Mammary epithelial cell (primary cell): ENCODE measurements at regions of chr1 and their contacts with region 1.

Region 1: DNA sequence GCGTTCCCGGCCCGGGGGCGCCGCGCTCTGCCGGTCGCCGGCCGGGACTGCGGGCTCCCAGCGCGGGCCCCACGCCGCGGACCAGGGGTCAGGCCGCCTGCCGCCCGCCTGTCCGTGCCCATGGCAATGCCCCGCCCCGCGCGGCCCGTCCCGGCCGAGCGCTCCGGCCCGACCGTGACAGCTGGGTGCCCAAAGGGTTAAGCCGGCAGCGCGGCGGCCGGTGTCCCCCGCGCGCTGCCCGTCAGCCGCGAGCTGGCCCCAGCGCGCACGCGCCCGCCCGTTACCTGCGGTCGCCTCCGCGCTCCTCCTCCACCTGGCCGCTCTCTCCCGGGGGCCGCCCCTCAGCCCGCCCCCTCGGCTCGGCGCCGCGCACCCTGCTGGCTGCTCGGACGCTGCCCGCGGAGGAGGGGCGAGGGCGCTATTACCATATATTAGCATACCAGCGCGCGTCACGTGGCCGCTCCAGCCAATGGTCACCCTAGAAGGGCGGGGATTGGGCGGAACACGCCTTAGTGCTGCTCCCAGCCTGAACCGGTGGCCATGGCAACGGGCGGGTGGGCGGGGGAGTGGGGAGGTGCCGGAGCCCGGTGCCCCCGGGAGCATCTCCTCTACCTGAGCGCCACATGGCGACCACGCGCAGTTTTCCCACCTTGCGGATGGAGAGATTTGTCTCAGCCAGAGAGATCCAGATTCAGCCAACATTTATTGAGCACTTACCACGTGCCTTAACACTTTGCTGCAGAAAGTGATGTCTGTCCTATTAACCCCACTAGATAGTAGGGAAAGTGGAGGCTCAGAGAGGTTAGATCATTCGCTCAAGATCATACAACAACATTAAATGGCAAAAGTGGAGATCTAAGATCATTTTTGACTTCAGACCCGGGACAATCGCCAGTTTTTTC is at the start of gene PHC2:
- DNase-seq: peak; percentile 97
- H3K4me3 ChIP-seq: peak within 1 kb of the TSS; percentile 70 to 82 (median 76)
- H3K27ac ChIP-seq: peak within 1 kb of the TSS; percentile 54
- H3K4me1 ChIP-seq: peaks cover 55% of the 10 kb centered on the region
- H3K27me3 ChIP-seq: no peaks in the 10 kb centered on the region
- CTCF ChIP-seq: peak in 1 of 2 donors; percentile 28
- total RNA-seq, gene PHC2: 136 to 140 TPM

Region 2: GRCh38 chr1:33127001-33127791 is 303.7 kb before region 1 on chr1:
- CTCF ChIA-PET with region 1: no interaction called
- dilution Hi-C with region 1: no loop called
- in situ Hi-C with region 1: loop called in 1 of 2 experiments (anchors 10 kb)
- intact Hi-C with region 1: no loop called
- DNase-seq: peak; percentile 99
- H3K4me3 ChIP-seq: peak overlapping the region; percentile 90 to 100 (median 96)
- H3K27ac ChIP-seq: peak overlapping the region; percentile 79
- H3K4me1 ChIP-seq: peaks cover 20% of the 10 kb centered on the region
- H3K27me3 ChIP-seq: no peaks in the 10 kb centered on the region
- CTCF ChIP-seq: peak; percentile 95 to 99

Region 3: GRCh38 chr1:33349778-33350610 is 80.9 kb before region 1 on chr1:
- CTCF ChIA-PET with region 1: no interaction called
- dilution Hi-C with region 1: no loop called
- in situ Hi-C with region 1: no loop called
- intact Hi-C with region 1: loop called (anchors 5 kb)
- DNase-seq: peak; percentile 72
- H3K4me3 ChIP-seq: peak overlapping the region; percentile 45 to 82 (median 73)
- H3K27ac ChIP-seq: peak overlapping the region; percentile 41
- H3K4me1 ChIP-seq: peaks cover 38% of the 10 kb centered on the region
- H3K27me3 ChIP-seq: no peaks in the 10 kb centered on the region
- CTCF ChIP-seq: no peak

Region 4: GRCh38 chr1:33384040-33384812 is 46.7 kb before region 1 on chr1:
- CTCF ChIA-PET with region 1: no interaction called
- dilution Hi-C with region 1: loop called (anchors 5 kb)
- in situ Hi-C with region 1: no loop called
- intact Hi-C with region 1: loop called (anchors 5 kb)
- DNase-seq: peak; percentile 59
- H3K4me3 ChIP-seq: no peak overlapping the region
- H3K27ac ChIP-seq: no peak overlapping the region
- H3K4me1 ChIP-seq: peaks cover 27% of the 10 kb centered on the region
- H3K27me3 ChIP-seq: no peaks in the 10 kb centered on the region
- CTCF ChIP-seq: no peak

Region 5: GRCh38 chr1:33470495-33471012 is 39.6 kb after region 1 on chr1:
- CTCF ChIA-PET with region 1: no interaction called
- dilution Hi-C with region 1: no loop called
- in situ Hi-C with region 1: no loop called
- intact Hi-C with region 1: no loop called
- DNase-seq: peak; percentile 87
- H3K4me3 ChIP-seq: no peak overlapping the region
- H3K27ac ChIP-seq: no peak overlapping the region
- H3K4me1 ChIP-seq: peaks cover 19% of the 10 kb centered on the region
- H3K27me3 ChIP-seq: no peaks in the 10 kb centered on the region
- CTCF ChIP-seq: peak; percentile 86 to 90

Region 6: GRCh38 chr1:33482412-33482811 is 51.5 kb after region 1 on chr1:
- CTCF ChIA-PET with region 1: no interaction called
- dilution Hi-C with region 1: no loop called
- in situ Hi-C with region 1: no loop called
- intact Hi-C with region 1: no loop called
- DNase-seq: no peak
- H3K4me3 ChIP-seq: no peak overlapping the region
- H3K27ac ChIP-seq: no peak overlapping the region
- H3K4me1 ChIP-seq: no peaks in the 10 kb centered on the region
- H3K27me3 ChIP-seq: no peaks in the 10 kb centered on the region
- CTCF ChIP-seq: no peak